Heart right ventricle (tissue), 16 donors: ENCODE measurements at regions of chr2 and their contacts with region 1.

Region 1: GRCh38 chr2:89833116-89833779 is 1141.8 kb downstream of the RPIA start:
- DNase-seq: no peak
- ATAC-seq: peak; percentile 55 to 83 (median 72)
- H3K4me3 ChIP-seq: no peak overlapping the region
- H3K27ac ChIP-seq: no peak overlapping the region
- H3K4me1 ChIP-seq: no peaks in the 10 kb centered on the region
- H3K27me3 ChIP-seq: no peaks in the 10 kb centered on the region
- CTCF ChIP-seq: no peak

Region 2: DNA sequence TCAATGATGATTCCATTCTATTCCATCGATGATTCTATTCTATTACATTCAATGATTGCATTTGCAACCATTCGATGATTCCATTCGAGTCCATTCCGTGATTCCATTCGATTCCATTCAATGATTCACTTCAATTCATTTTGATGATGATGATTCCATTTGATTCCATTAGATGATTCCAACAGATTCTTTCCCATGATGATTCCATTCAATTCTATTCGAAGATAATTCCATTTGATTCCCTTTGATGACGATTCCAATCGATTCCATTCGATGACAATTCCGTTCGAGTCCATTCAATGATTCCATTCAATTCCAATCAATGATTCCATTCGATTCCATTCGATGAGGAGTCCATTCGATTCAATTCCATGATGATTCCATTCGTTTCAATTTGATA is 52.9 kb before region 1 on chr2:
- intact Hi-C with region 1: loop called in 1 of 10 experiments (anchors 5 kb)
- DNase-seq: no peak
- ATAC-seq: no peak
- H3K4me3 ChIP-seq: no peak overlapping the region
- H3K27ac ChIP-seq: no peak overlapping the region
- H3K4me1 ChIP-seq: no peaks in the 10 kb centered on the region
- H3K27me3 ChIP-seq: no peaks in the 10 kb centered on the region
- CTCF ChIP-seq: no peak